ENCODE measurements at regions of chr9 and their contacts with region 1.

Region 1: GRCh38 chr9:77433675-77434445 is 214.3 kb downstream of the GNA14 start:
- H3K4me3 Mint-ChIP-seq: no peak overlapping the region
- H3K27ac Mint-ChIP-seq: no peak overlapping the region
- H3K4me1 Mint-ChIP-seq: peaks cover 6% of the 10 kb centered on the region
- H3K27me3 Mint-ChIP-seq: no peaks in the 10 kb centered on the region

Region 2: GRCh38 chr9:77744841-77745430 is 311.1 kb after region 1 on chr9:
- intact Hi-C with region 1: loop called (anchors 5 kb)
- H3K4me3 Mint-ChIP-seq: no peak overlapping the region
- H3K27ac Mint-ChIP-seq: peak overlapping the region; percentile 25
- H3K4me1 Mint-ChIP-seq: peaks cover 34% of the 10 kb centered on the region
- H3K27me3 Mint-ChIP-seq: no peaks in the 10 kb centered on the region

Measured in dendritic cell treated with granulocyte-macrophage colony-stimulating factor and Interleukin-4, amounts not matched to agents 40 ng/mL and 50 ng/mL, for 4 days (primary cell).